Panc1 (cell line): ENCODE measurements at regions of chr12 and their contacts with region 1.

Region 1: DNA sequence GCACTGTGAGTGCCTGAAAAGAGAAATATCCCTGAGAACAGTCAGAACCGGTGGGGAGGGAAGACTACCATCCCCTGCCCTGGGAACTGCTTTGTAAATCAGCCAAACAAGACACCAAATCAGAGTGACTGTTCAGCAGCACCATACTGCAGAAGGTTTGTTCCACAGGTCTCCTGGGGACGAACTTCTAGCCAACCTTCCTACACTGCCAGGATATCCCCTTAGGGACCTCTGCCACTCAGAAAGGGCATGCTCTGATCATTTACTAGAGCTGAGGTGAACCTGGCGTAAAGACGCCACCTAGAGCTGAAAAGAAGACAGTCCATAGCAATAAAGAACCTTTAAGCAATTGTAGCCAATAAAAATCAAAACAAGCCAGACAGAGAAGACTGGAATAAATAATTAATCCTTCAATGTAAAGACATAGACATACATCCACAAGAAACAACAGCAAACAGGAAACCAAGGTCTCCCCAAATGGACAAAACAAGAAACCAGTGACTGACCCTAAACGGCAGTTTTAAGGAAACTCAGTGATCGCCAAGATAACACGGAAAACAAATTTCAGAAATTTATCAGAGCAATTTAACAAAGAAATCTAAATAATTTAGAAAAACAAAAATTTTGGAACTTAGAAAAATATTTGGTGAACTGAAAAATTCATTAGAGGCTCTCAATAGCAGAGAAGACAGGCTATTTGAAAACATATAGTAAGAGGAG is 228.1 kb upstream of the AMIGO2 start:
- DNase-seq: peak; percentile 71
- ATAC-seq: peak; percentile 97
- H3K4me3 ChIP-seq: no peak overlapping the region
- H3K27ac ChIP-seq: peak overlapping the region; percentile 31; the same call in 1 of the 2 replicates
- H3K4me1 ChIP-seq: no peaks in the 10 kb centered on the region
- H3K27me3 ChIP-seq: no peaks in the 10 kb centered on the region
- CTCF ChIP-seq: peak; percentile 75

Region 2: DNA sequence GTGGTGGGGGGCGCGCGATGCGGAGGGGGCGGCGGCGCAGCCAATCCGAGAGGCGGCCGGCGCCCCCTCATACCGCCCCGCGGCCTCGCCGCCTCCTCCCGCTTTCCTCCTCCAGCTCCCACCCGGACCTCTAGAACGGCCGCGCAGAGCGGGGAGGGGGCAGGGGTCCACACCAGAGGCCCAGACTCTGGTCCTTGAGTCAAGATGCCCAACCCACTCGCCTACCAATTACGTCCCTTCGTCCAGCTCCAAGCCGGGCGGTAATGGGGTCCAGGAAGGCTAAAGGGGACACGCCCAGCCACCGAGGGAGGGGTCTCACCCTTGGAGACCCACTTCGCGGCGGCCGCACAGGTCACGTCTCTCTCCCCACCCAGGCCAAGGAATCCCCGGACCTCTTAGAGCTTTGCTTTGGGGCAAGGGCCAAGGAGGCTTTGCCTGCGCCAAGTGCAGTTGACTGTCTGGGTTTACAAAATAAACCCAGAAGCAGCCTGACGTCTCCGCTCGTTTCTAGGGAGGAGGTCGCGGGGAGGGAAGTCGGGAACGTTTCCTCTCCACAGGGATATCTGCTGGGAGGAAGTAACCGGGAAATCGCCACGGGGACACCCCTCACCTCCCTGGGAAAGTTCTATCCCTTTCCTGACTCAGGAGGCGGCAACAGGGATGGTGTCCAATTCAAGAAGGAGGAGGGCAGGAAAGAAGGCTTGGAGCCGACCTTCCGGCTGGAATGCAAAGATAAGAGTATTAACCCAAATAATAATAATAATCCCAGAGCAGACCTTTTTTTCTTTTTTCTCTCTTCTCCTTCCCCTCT is 227.7 kb before region 1 on chr12:
- CTCF ChIA-PET with region 1: interaction called, 4 read pairs
- POLR2A ChIA-PET with region 1: no interaction called
- in situ Hi-C with region 1: no loop called
- intact Hi-C with region 1: loop called (anchors 5 kb)
- DNase-seq: no peak
- ATAC-seq: peak; percentile 69
- H3K4me3 ChIP-seq: peak overlapping the region; percentile 67 to 85
- H3K27ac ChIP-seq: peak overlapping the region; percentile 86
- H3K4me1 ChIP-seq: peaks cover 38% of the 10 kb centered on the region
- H3K27me3 ChIP-seq: peaks cover 2% of the 10 kb centered on the region; the same call in 1 of the 2 replicates
- CTCF ChIP-seq: no peak

Region 3: GRCh38 chr12:47247433-47247832 is 60.4 kb before region 1 on chr12:
- CTCF ChIA-PET with region 1: no interaction called
- POLR2A ChIA-PET with region 1: no interaction called
- in situ Hi-C with region 1: no loop called
- intact Hi-C with region 1: no loop called
- DNase-seq: no peak
- ATAC-seq: no peak
- H3K4me3 ChIP-seq: no peak overlapping the region
- H3K27ac ChIP-seq: no peak overlapping the region
- H3K4me1 ChIP-seq: no peaks in the 10 kb centered on the region
- H3K27me3 ChIP-seq: no peaks in the 10 kb centered on the region
- CTCF ChIP-seq: no peak